MCF 10A (cell line): ENCODE measurements at regions of chr3 and their contacts with region 1.

Region 1: DNA sequence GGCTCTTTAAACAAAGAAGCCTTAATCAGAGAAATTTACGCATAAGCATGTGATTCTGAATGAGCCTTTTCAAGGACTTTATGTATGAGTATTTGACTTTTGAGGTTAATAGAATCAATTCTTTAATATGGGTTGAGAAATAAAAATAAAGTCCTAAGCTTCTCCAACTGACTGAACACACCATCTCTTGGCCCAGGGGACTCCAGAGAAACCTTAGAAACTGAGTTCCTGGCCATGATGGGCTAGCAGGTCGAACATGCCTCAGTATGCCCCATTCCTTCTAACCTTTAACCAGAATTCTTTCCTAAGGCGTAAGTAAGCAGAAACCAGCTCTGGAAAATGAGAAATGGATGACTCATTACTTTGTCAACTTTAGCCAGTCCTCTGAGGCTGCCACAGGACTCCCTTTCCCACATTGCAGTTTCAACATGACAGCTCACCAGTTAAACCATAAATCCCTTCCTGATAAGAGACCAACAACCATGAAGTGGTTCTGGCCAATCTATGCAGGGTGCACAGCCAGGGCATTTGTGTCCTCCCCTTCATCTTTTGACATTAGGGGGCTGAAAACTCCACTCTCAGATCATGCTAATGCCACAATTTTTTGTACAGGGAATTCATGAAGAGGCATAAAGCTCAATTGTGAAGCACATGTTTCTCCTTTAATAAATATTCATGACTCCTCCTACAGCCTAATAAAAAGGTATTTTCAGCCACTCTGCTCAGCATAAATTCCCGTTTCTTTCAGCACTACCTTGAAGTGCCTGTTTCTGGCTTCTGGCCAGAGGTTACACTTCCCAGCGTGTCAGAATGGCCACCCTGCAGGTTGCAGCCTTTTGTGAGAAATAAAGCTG is 33.3 kb downstream of the TM4SF18 start:
- DNase-seq: peak; percentile 97
- H3K4me3 Mint-ChIP-seq: peak overlapping the region; percentile 30
- H3K27ac Mint-ChIP-seq: peak overlapping the region; percentile 90
- H3K4me1 Mint-ChIP-seq: peaks cover 21% of the 10 kb centered on the region
- H3K27me3 Mint-ChIP-seq: no peaks in the 10 kb centered on the region
- CTCF ChIP-seq: no peak

Region 2: GRCh38 chr3:149180057-149180573 is 120.0 kb before region 1 on chr3:
- CTCF ChIA-PET with region 1: interaction called, 3 read pairs
- POLR2A ChIA-PET with region 1: interaction called, 11 read pairs
- intact Hi-C with region 1: no loop called
- DNase-seq: peak; percentile 100
- H3K4me3 Mint-ChIP-seq: no peak overlapping the region
- H3K27ac Mint-ChIP-seq: no peak overlapping the region
- H3K4me1 Mint-ChIP-seq: peaks cover 6% of the 10 kb centered on the region
- H3K27me3 Mint-ChIP-seq: no peaks in the 10 kb centered on the region
- CTCF ChIP-seq: no peak

Region 3: GRCh38 chr3:149310796-149311534 is 10.8 kb after region 1 on chr3:
- CTCF ChIA-PET with region 1: interaction called, 8 read pairs
- POLR2A ChIA-PET with region 1: interaction called, 22 read pairs
- intact Hi-C with region 1: no loop called
- DNase-seq: peak; percentile 26
- H3K4me3 Mint-ChIP-seq: no peak overlapping the region
- H3K27ac Mint-ChIP-seq: peak overlapping the region; percentile 49
- H3K4me1 Mint-ChIP-seq: peaks cover 13% of the 10 kb centered on the region
- H3K27me3 Mint-ChIP-seq: no peaks in the 10 kb centered on the region
- CTCF ChIP-seq: no peak

Region 4: GRCh38 chr3:149339931-149340309 is 39.8 kb after region 1 on chr3:
- CTCF ChIA-PET with region 1: interaction called, 3 read pairs
- POLR2A ChIA-PET with region 1: interaction called, 9 read pairs
- intact Hi-C with region 1: loop called (anchors 2 kb)
- DNase-seq: peak; percentile 91
- H3K4me3 Mint-ChIP-seq: no peak overlapping the region
- H3K27ac Mint-ChIP-seq: peak overlapping the region; percentile 85
- H3K4me1 Mint-ChIP-seq: peaks cover 10% of the 10 kb centered on the region
- H3K27me3 Mint-ChIP-seq: no peaks in the 10 kb centered on the region
- CTCF ChIP-seq: no peak

Region 5: GRCh38 chr3:149366941-149367840 is 67.0 kb after region 1 on chr3:
- CTCF ChIA-PET with region 1: no interaction called
- POLR2A ChIA-PET with region 1: interaction called, 32 read pairs
- intact Hi-C with region 1: no loop called
- DNase-seq: peak; percentile 90
- H3K4me3 Mint-ChIP-seq: no peak overlapping the region
- H3K27ac Mint-ChIP-seq: peak overlapping the region; percentile 77
- H3K4me1 Mint-ChIP-seq: peaks cover 31% of the 10 kb centered on the region
- H3K27me3 Mint-ChIP-seq: no peaks in the 10 kb centered on the region
- CTCF ChIP-seq: no peak

Region 6: GRCh38 chr3:149384911-149385321 is 84.8 kb after region 1 on chr3:
- CTCF ChIA-PET with region 1: no interaction called
- POLR2A ChIA-PET with region 1: interaction called, 15 read pairs
- intact Hi-C with region 1: loop called (anchors 5 kb)
- DNase-seq: peak; percentile 88
- H3K4me3 Mint-ChIP-seq: no peak overlapping the region
- H3K27ac Mint-ChIP-seq: peak overlapping the region; percentile 98
- H3K4me1 Mint-ChIP-seq: peaks cover 49% of the 10 kb centered on the region
- H3K27me3 Mint-ChIP-seq: no peaks in the 10 kb centered on the region
- CTCF ChIP-seq: no peak

Region 7: GRCh38 chr3:149414557-149415231 is 114.5 kb after region 1 on chr3:
- CTCF ChIA-PET with region 1: no interaction called
- POLR2A ChIA-PET with region 1: no interaction called
- intact Hi-C with region 1: no loop called
- DNase-seq: no peak
- H3K4me3 Mint-ChIP-seq: no peak overlapping the region
- H3K27ac Mint-ChIP-seq: peak overlapping the region; percentile 63
- H3K4me1 Mint-ChIP-seq: peaks cover 12% of the 10 kb centered on the region
- H3K27me3 Mint-ChIP-seq: no peaks in the 10 kb centered on the region
- CTCF ChIP-seq: no peak